Panc1 (cell line): ENCODE measurements at regions of chr3 and their contacts with region 1.

Region 1: DNA sequence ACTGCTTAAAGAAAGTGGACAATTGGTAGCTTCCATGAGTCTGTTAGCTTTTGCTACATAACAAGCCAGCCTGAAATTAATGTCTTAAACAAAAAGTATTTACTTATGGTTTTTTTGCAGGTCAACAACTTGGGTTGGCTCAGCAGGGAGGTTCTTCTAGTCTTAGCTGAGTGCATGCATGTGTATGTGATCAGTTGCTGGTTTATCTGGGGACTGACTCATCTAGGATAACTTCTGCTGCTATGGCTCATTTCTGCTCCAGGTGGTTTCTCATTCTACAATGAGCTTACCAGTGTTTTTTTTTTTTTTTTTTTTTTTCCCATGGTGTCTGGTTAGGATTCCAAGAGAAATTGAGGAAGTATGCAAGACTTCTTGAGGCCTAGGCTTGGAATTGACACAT is 244.7 kb downstream of the NSUN3 start:
- DNase-seq: no peak
- ATAC-seq: no peak
- H3K4me3 ChIP-seq: no peak overlapping the region
- H3K27ac ChIP-seq: no peak overlapping the region
- H3K4me1 ChIP-seq: no peaks in the 10 kb centered on the region
- H3K27me3 ChIP-seq: no peaks in the 10 kb centered on the region
- CTCF ChIP-seq: no peak

Region 2: GRCh38 chr3:94146455-94146854 is 161.1 kb before region 1 on chr3:
- CTCF ChIA-PET with region 1: no interaction called
- POLR2A ChIA-PET with region 1: no interaction called
- in situ Hi-C with region 1: no loop called
- intact Hi-C with region 1: no loop called
- DNase-seq: no peak
- ATAC-seq: no peak
- H3K4me3 ChIP-seq: no peak overlapping the region
- H3K27ac ChIP-seq: no peak overlapping the region
- H3K4me1 ChIP-seq: no peaks in the 10 kb centered on the region
- H3K27me3 ChIP-seq: no peaks in the 10 kb centered on the region
- CTCF ChIP-seq: no peak

Region 3: GRCh38 chr3:94373456-94373855 is 65.9 kb after region 1 on chr3:
- CTCF ChIA-PET with region 1: interaction called, 15 read pairs
- POLR2A ChIA-PET with region 1: no interaction called
- in situ Hi-C with region 1: no loop called
- intact Hi-C with region 1: no loop called
- DNase-seq: no peak
- ATAC-seq: no peak
- H3K4me3 ChIP-seq: no peak overlapping the region
- H3K27ac ChIP-seq: no peak overlapping the region
- H3K4me1 ChIP-seq: no peaks in the 10 kb centered on the region
- H3K27me3 ChIP-seq: no peaks in the 10 kb centered on the region
- CTCF ChIP-seq: no peak